Natural killer cell (primary cell): ENCODE measurements at regions of chr19 and their contacts with region 1.

Region 1: DNA sequence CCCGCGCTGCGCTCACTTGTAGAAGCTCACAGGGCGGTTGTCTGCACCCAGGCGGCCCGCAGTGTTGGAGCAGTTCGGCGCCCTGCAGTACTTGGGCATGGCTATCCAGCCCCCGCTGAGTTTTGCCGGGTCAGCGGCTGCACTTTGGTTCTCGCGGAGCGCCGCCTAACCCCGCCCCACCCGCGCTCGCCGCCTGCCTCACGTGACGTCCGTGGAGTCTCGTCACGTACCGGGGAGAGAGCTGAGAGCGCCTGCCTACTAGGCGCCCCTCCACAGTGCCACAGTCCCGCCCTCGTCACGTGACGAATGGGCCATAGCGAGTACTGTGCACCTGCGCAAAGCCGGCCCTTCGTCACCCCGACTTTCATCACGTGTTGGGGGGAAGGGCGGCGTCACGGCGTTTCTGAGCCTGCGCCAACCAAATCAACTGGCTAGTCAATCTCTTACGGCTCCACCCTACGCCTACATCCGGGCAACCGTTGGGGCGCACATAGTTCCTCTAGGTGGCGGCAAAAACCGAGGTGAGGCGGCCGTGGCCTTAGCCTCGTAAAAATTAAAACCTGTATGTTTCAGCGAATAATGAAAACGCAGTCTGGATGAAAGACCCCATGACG is at the start of gene THAP8:
- DNase-seq: peak; percentile 99 to 100
- ATAC-seq: peak; percentile 83 to 94 (median 84)
- H3K4me3 ChIP-seq: peak within 1 kb of the TSS; percentile 85
- H3K4me3 Mint-ChIP-seq: peak within 1 kb of the TSS; percentile 98
- H3K27ac ChIP-seq: peak within 1 kb of the TSS; percentile 90
- H3K27ac Mint-ChIP-seq: peak within 1 kb of the TSS; percentile 93 to 94
- H3K4me1 ChIP-seq: peaks cover 18% of the 10 kb centered on the region
- H3K4me1 Mint-ChIP-seq: peaks cover 26 to 29% of the 10 kb centered on the region in 2 donors
- H3K27me3 ChIP-seq: no peaks in the 10 kb centered on the region
- H3K27me3 Mint-ChIP-seq: no peaks in the 10 kb centered on the region
- CTCF ChIP-seq: peak; percentile 66
- total RNA-seq, gene THAP8: 1.8 to 3.2 (median 2.8) TPM

Region 2: DNA sequence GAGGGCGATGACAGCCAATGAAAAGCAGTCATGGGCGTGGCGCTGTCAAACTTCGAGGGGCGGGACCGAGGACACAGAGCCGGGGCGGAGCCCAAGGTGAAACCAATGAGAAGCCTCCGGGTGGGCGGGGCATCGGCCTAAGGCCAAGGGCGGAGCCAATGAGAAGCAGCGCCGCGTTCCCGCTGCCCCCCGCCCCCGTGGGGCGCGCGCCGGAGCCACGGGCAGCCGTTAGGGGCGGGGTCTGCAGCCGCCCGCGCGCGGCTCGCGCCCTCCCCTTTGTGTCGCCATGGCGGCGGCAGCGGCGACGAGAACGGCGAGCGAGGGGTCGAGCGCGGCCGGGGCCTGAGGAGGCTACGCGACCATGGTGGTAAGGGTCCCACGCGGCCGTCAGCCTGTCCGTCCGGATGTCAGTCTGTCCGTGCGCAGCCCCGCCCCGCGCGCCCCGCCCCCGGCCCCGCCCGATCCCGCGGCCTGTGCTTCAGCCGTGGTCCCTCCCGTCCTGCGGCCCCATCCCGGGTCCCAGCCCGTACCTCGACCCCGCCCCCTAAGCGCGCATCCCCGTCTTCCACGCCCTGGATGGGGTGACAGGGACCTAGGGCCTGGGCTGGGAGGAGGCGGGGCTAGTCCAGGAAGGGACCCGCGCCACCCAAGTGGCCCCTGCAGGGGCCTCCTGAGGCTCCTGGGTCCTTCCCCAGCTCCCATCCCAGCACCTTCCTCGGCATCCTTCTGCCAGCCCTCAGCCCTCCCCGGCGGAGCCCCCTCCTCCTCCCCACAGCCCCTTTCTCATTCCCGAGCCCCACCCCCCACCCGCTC is 278.7 kb before region 1 on chr19 and contains the start of gene ARHGAP33:
- intact Hi-C with region 1: no loop called
- DNase-seq: peak; percentile 98 to 99
- ATAC-seq: peak; percentile 98 to 100 (median 99)
- H3K4me3 ChIP-seq: peak within 1 kb of the TSS; percentile 58
- H3K4me3 Mint-ChIP-seq: peak within 1 kb of the TSS; percentile 90
- H3K27ac ChIP-seq: no peak within 1 kb of the TSS
- H3K27ac Mint-ChIP-seq: peak within 1 kb of the TSS; percentile 43 to 72
- H3K4me1 ChIP-seq: peaks cover 16% of the 10 kb centered on the region
- H3K4me1 Mint-ChIP-seq: peaks cover 18 to 27% of the 10 kb centered on the region in 2 donors
- H3K27me3 ChIP-seq: no peaks in the 10 kb centered on the region
- H3K27me3 Mint-ChIP-seq: no peaks in the 10 kb centered on the region
- CTCF ChIP-seq: no peak
- total RNA-seq, gene ARHGAP33: 34.4 to 39.3 (median 37.5) TPM

Region 3: DNA sequence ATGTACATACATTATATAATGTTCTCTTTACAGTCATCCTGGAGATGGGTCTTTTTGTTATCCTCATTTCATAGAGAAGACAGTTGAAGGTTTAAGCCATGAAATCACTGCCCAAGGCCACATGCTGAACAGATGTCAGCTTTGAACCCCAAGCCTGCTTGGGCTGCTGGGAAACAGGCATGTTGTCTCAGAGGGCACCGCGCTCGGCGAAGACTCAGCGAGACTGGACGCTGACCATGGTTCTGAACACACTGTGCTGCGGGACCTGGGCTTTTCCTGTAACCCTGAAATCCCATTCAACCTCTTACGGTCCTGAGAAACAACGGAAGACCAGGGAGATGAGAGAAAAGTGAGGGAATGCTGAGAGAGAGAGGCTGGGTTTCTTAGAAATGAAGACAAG is 90.7 kb before region 1 on chr19:
- intact Hi-C with region 1: no loop called
- DNase-seq: peak; percentile 29 to 68
- ATAC-seq: peak in 2 of 3 donors; percentile 33 to 46
- H3K4me3 ChIP-seq: no peak overlapping the region
- H3K4me3 Mint-ChIP-seq: no peak overlapping the region
- H3K27ac ChIP-seq: no peak overlapping the region
- H3K27ac Mint-ChIP-seq: no peak overlapping the region
- H3K4me1 ChIP-seq: peaks cover 39% of the 10 kb centered on the region
- H3K4me1 Mint-ChIP-seq: peaks cover 13 to 23% of the 10 kb centered on the region in 2 donors
- H3K27me3 ChIP-seq: peaks cover 2% of the 10 kb centered on the region
- H3K27me3 Mint-ChIP-seq: peaks cover 12 to 16% of the 10 kb centered on the region in 2 donors
- CTCF ChIP-seq: no peak

Region 4: DNA sequence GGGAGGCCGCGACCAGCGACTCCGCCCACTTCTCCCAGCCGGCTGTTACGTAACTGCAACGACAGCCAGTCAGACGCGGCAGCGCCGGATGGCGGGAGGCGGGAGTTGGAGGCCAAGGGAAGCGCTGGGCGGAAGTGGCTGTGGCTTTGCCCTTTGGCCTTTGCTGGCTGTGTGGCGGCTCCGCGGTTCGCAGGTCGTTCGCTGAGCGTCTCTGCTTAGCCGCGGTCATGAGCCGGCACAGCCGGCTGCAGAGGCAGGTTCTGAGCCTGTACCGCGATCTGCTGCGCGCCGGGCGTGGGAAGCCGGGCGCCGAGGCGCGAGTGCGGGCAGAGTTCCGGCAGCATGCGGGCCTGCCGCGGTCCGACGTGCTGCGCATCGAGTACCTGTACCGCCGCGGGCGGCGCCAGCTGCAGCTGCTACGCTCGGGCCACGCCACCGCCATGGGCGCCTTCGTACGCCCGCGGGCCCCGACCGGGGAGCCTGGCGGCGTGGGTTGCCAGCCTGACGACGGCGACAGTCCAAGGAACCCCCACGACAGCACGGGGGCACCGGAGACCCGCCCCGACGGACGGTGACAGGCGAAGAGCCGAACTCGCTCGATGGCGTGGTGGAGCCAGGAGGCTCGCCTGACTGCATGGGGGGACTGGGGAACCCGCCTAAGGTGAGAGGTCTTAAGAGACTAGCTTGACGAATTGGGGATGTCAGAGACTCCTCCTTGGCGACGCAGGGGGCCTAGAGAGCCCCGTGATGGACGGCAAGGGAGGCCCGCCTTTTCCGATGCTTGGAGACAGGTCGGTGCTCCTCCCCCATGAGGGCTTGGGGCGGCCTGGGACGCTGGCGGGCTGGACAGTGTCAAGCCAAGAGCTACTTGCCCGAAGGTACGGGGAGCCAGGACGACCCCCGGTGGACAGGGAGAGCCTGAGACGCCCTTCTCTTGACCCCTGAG is 58.9 kb before region 1 on chr19 and contains the start of gene SDHAF1:
- intact Hi-C with region 1: loop called (anchors 5 kb)
- DNase-seq: peak; percentile 88 to 95
- ATAC-seq: peak; percentile 89 to 94 (median 91)
- H3K4me3 ChIP-seq: peak within 1 kb of the TSS; percentile 59
- H3K4me3 Mint-ChIP-seq: peak within 1 kb of the TSS; percentile 96
- H3K27ac ChIP-seq: peak within 1 kb of the TSS; percentile 83
- H3K27ac Mint-ChIP-seq: peak within 1 kb of the TSS; percentile 91 to 95
- H3K4me1 ChIP-seq: peaks cover 26% of the 10 kb centered on the region
- H3K4me1 Mint-ChIP-seq: peaks cover 12 to 30% of the 10 kb centered on the region in 2 donors
- H3K27me3 ChIP-seq: no peaks in the 10 kb centered on the region
- H3K27me3 Mint-ChIP-seq: no peaks in the 10 kb centered on the region
- CTCF ChIP-seq: no peak
- total RNA-seq, gene SDHAF1: 9.2 to 12.1 (median 10.5) TPM

Region 5: GRCh38 chr19:36014029-36014924 is 39.9 kb before region 1 on chr19 and contains the start of gene ALKBH6:
- intact Hi-C with region 1: loop called (anchors 1 kb)
- DNase-seq: peak; percentile 99
- ATAC-seq: peak; percentile 97 to 100 (median 97)
- H3K4me3 ChIP-seq: peak within 1 kb of the TSS; percentile 85
- H3K4me3 Mint-ChIP-seq: peak within 1 kb of the TSS; percentile 98
- H3K27ac ChIP-seq: peak within 1 kb of the TSS; percentile 89
- H3K27ac Mint-ChIP-seq: peak within 1 kb of the TSS; percentile 95 to 99
- H3K4me1 ChIP-seq: peaks cover 23% of the 10 kb centered on the region
- H3K4me1 Mint-ChIP-seq: peaks cover 35 to 46% of the 10 kb centered on the region in 2 donors
- H3K27me3 ChIP-seq: no peaks in the 10 kb centered on the region
- H3K27me3 Mint-ChIP-seq: no peaks in the 10 kb centered on the region
- CTCF ChIP-seq: no peak
- total RNA-seq, gene ALKBH6: 39.0 to 57.3 (median 48.1) TPM

Region 6: GRCh38 chr19:36139473-36140303 is 85.5 kb after region 1 on chr19 and contains the start of gene CAPNS1:
- intact Hi-C with region 1: loop called (anchors 1 kb)
- DNase-seq: peak; percentile 91 to 96
- ATAC-seq: peak; percentile 68 to 88 (median 78)
- H3K4me3 ChIP-seq: peak within 1 kb of the TSS; percentile 94
- H3K4me3 Mint-ChIP-seq: peak within 1 kb of the TSS; percentile 96
- H3K27ac ChIP-seq: peak within 1 kb of the TSS; percentile 76
- H3K27ac Mint-ChIP-seq: peak within 1 kb of the TSS; percentile 88 to 90
- H3K4me1 ChIP-seq: peaks cover 19% of the 10 kb centered on the region
- H3K4me1 Mint-ChIP-seq: peaks cover 17 to 29% of the 10 kb centered on the region in 2 donors
- H3K27me3 ChIP-seq: no peaks in the 10 kb centered on the region
- H3K27me3 Mint-ChIP-seq: no peaks in the 10 kb centered on the region
- CTCF ChIP-seq: no peak
- total RNA-seq, gene CAPNS1: 569 to 637 (median 578) TPM

Region 7: DNA sequence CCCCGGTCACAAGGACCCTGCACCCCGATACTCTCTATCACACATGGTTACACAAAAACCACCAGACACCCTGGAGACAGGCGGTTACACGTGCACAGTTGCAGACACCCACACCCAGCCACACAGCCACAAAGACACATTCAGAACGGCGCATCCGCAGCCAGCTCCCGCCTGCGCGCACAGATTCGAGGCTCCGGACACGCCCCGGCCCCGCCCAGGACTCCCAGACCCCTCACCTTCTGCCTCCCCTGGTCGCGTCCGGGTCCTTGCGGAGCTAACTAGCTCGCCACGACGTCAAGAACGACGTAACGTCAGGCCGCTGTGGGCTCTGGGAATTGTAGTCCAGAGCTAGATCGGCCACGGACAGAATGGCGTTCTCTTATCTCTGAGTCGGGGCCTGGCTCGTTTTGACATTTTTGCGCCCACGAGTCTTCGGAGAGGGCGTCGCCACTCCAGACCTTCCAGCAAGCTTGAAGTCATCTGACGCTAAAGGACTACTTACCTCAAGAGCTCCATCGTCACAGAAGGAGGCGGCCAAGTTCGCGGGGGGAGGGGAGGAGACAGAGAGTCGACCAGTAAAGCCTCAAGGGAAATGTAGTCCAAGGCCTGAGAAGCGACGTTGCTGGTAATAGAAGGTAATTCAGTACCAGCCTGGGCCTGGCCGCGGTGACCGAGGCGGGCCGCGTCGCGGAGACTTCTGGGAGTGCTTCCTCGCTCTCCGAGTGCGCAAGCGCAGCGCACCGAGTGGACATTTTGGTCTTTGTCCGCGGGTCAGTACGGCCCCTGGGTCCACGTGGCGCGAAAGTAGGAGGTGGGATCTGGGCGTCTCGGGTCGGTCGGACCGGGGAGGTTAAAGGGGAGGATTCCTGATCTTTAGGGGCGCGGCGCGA is 160.4 kb after region 1 on chr19 and contains the starts of genes ZNF146 and ZNF565:
- intact Hi-C with region 1: loop called (anchors 1 kb)
- DNase-seq: peak; percentile 90 to 97
- ATAC-seq: peak; percentile 81 to 95 (median 86)
- H3K4me3 ChIP-seq: peak within 1 kb of the TSS; percentile 92
- H3K4me3 Mint-ChIP-seq: no peak within 1 kb of the TSS
- H3K27ac ChIP-seq: peak within 1 kb of the TSS; percentile 91
- H3K27ac Mint-ChIP-seq: no peak within 1 kb of the TSS
- H3K4me1 ChIP-seq: peaks cover 18% of the 10 kb centered on the region
- H3K4me1 Mint-ChIP-seq: peaks cover 12 to 14% of the 10 kb centered on the region in 2 donors
- H3K27me3 ChIP-seq: no peaks in the 10 kb centered on the region
- H3K27me3 Mint-ChIP-seq: no peaks in the 10 kb centered on the region
- CTCF ChIP-seq: no peak
- total RNA-seq, gene ZNF146: 20.3 to 37.3 (median 21.5) TPM
- total RNA-seq, gene ZNF565: 7.7 to 19.1 (median 10.5) TPM